ENCODE measurements at regions of chr17 and their contacts with region 1.

Region 1: DNA sequence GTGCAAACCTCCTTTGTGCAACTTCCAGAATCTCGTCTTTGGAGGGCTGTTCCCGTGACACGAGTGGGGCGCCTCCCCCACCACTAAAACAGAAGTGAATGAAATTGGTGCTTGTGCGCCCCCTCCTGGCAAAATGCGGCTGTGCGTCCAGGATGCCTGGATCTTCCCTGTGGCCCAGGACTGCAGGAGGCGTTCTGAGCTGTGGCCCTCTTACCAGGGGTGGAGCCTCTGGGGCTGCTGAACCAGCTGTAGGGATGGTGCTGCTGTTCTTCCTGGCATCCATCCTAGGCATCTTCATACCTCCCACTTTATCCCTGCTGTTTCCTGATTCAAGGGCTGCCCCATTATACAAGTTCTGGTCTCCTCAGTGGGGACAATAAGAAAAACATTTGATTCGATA is 18.5 kb upstream of the NAGLU start:
- DNase-seq: peak; percentile 58 to 97 (median 83)

Region 2: GRCh38 chr17:42132941-42133340 is 384.6 kb before region 1 on chr17:
- intact Hi-C with region 1: no loop called
- DNase-seq: peak in 8 of 10 donors; percentile 46 to 94 (median 63)

Region 3: GRCh38 chr17:42312285-42313130 is 205.0 kb before region 1 on chr17:
- intact Hi-C with region 1: loop called (anchors 5 kb)
- DNase-seq: peak; percentile 76 to 97 (median 86)